Left colon (tissue), 2 donors: ENCODE measurements at regions of chr5 and their contacts with region 1.

Region 1: GRCh38 chr5:168123631-168124528 is 167.6 kb upstream of the WWC1 start:
- DNase-seq: no peak
- ATAC-seq: no peak

Region 2: GRCh38 chr5:168057905-168058304 is 66.0 kb before region 1 on chr5:
- intact Hi-C with region 1: no loop called
- DNase-seq: no peak
- ATAC-seq: no peak

Region 3: GRCh38 chr5:168219515-168220410 is 95.9 kb after region 1 on chr5:
- intact Hi-C with region 1: loop called in 1 of 2 experiments (anchors 10 kb)
- DNase-seq: peak in 1 of 2 donors; percentile 35
- ATAC-seq: peak; percentile 82